T-cell (primary cell): ENCODE measurements at regions of chr2 and their contacts with region 1.

Region 1: GRCh38 chr2:48140586-48140985 is 234.3 kb upstream of the FBXO11 start:
- DNase-seq: no peak
- ATAC-seq: no peak
- H3K4me3 ChIP-seq: no peak overlapping the region
- H3K4me3 Mint-ChIP-seq: no peak overlapping the region
- H3K27ac ChIP-seq: no peak overlapping the region
- H3K27ac Mint-ChIP-seq: no peak overlapping the region
- H3K4me1 ChIP-seq: peaks cover 0 to 5% of the 10 kb centered on the region in 2 experiments
- H3K4me1 Mint-ChIP-seq: peaks cover 10 to 13% (median 10%) of the 10 kb centered on the region in 3 donors
- H3K27me3 ChIP-seq: no peaks in the 10 kb centered on the region
- H3K27me3 Mint-ChIP-seq: peaks cover 0 to 4% of the 10 kb centered on the region in 2 donors

Region 2: DNA sequence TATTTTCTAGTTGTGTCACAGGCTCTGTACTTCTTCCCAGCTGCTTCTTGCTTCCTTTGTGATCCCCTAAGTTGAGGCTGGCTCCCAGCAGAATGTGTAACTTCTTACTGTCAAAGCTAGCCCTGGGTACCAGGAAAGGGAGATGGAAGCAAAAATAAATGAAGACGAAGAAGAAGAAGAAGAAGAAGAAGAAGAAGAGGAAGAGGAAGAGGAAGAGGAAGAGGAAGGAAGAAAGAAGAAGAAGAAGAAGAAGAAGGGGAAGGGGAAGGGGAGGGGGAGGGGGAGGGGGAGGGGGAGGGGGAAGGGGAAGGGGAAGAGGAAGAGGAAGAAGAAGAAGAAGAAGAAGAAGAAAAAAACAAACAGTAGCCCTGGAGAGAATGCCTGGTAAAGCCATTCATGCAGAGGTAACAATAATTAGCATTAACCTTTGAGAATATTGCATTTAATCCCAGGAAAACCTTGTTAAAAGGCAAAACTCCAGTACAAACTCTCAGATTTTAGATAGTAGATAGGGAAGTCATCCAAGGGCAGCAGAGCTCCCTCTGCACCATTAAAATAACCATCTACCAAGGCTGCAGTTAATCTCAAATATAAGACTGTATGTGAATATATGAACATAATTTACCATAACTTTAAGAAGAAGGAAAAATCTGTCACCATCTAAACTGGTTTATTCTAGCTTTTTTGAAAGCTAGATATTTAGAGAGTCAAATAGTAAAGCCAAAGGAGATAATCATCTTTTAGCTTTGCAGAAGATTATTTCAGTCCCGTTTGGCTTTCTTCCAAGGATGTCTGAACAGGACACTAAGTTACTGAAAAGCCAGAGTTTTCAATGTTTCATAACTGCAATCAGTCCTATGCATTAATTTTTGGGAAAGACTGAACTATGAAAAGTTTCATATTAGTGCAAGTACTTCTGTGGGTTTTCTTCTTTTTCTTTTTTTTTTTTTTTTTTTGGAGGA is 190.0 kb before region 1 on chr2:
- CTCF ChIA-PET with region 1: no interaction called
- POLR2A ChIA-PET with region 1: interaction called in 1 of 2 experiments, 12 read pairs
- DNase-seq: no peak
- ATAC-seq: no peak
- H3K4me3 ChIP-seq: no peak overlapping the region
- H3K4me3 Mint-ChIP-seq: no peak overlapping the region
- H3K27ac ChIP-seq: no peak overlapping the region
- H3K27ac Mint-ChIP-seq: peak overlapping the region in 1 of 2 donors; percentile 52
- H3K4me1 ChIP-seq: no peaks in the 10 kb centered on the region
- H3K4me1 Mint-ChIP-seq: peaks cover 0 to 7% (median 0%) of the 10 kb centered on the region in 3 donors
- H3K27me3 ChIP-seq: peaks cover 0 to 9% of the 10 kb centered on the region in 2 experiments
- H3K27me3 Mint-ChIP-seq: peaks cover 8 to 11% of the 10 kb centered on the region in 2 donors

Region 3: GRCh38 chr2:48165070-48165753 is 24.6 kb after region 1 on chr2:
- CTCF ChIA-PET with region 1: no interaction called
- POLR2A ChIA-PET with region 1: no interaction called
- DNase-seq: no peak
- ATAC-seq: no peak
- H3K4me3 ChIP-seq: no peak overlapping the region
- H3K4me3 Mint-ChIP-seq: no peak overlapping the region
- H3K27ac ChIP-seq: no peak overlapping the region
- H3K27ac Mint-ChIP-seq: no peak overlapping the region
- H3K4me1 ChIP-seq: no peaks in the 10 kb centered on the region
- H3K4me1 Mint-ChIP-seq: no peaks in the 10 kb centered on the region
- H3K27me3 ChIP-seq: no peaks in the 10 kb centered on the region
- H3K27me3 Mint-ChIP-seq: peaks cover 0 to 1% of the 10 kb centered on the region in 2 donors